ENCODE measurements at regions of chrX and their contacts with region 1.

Region 1: GRCh38 chrX:119698845-119699244 is 5.9 kb upstream of the SEPTIN6 start:
- DNase-seq: peak; percentile 65
- ATAC-seq: peak; percentile 67
- H3K4me3 ChIP-seq: no peak overlapping the region
- H3K27ac ChIP-seq: no peak overlapping the region
- H3K4me1 ChIP-seq: no peaks in the 10 kb centered on the region
- H3K27me3 ChIP-seq: no peaks in the 10 kb centered on the region
- CTCF ChIP-seq: peak; percentile 59

Region 2: GRCh38 chrX:119729408-119730201 is 30.8 kb after region 1 on chrX:
- CTCF ChIA-PET with region 1: interaction called, 3 read pairs
- POLR2A ChIA-PET with region 1: no interaction called
- intact Hi-C with region 1: loop called (anchors 2 kb)
- DNase-seq: peak; percentile 74
- ATAC-seq: peak; percentile 68
- H3K4me3 ChIP-seq: no peak overlapping the region
- H3K27ac ChIP-seq: no peak overlapping the region
- H3K4me1 ChIP-seq: no peaks in the 10 kb centered on the region
- H3K27me3 ChIP-seq: no peaks in the 10 kb centered on the region
- CTCF ChIP-seq: peak; percentile 66

Region 3: GRCh38 chrX:119757979-119758730 is 59.3 kb after region 1 on chrX and contains the start of gene SOWAHD:
- CTCF ChIA-PET with region 1: no interaction called
- POLR2A ChIA-PET with region 1: no interaction called
- intact Hi-C with region 1: loop called (anchors 2 kb)
- DNase-seq: peak; percentile 50
- ATAC-seq: peak; percentile 72
- H3K4me3 ChIP-seq: peak within 1 kb of the TSS; percentile 82
- H3K27ac ChIP-seq: no peak within 1 kb of the TSS
- H3K4me1 ChIP-seq: peaks cover 11% of the 10 kb centered on the region
- H3K27me3 ChIP-seq: no peaks in the 10 kb centered on the region
- CTCF ChIP-seq: no peak
- total RNA-seq, gene SOWAHD: 2.3 and 2.5 TPM in 2 replicates

Region 4: DNA sequence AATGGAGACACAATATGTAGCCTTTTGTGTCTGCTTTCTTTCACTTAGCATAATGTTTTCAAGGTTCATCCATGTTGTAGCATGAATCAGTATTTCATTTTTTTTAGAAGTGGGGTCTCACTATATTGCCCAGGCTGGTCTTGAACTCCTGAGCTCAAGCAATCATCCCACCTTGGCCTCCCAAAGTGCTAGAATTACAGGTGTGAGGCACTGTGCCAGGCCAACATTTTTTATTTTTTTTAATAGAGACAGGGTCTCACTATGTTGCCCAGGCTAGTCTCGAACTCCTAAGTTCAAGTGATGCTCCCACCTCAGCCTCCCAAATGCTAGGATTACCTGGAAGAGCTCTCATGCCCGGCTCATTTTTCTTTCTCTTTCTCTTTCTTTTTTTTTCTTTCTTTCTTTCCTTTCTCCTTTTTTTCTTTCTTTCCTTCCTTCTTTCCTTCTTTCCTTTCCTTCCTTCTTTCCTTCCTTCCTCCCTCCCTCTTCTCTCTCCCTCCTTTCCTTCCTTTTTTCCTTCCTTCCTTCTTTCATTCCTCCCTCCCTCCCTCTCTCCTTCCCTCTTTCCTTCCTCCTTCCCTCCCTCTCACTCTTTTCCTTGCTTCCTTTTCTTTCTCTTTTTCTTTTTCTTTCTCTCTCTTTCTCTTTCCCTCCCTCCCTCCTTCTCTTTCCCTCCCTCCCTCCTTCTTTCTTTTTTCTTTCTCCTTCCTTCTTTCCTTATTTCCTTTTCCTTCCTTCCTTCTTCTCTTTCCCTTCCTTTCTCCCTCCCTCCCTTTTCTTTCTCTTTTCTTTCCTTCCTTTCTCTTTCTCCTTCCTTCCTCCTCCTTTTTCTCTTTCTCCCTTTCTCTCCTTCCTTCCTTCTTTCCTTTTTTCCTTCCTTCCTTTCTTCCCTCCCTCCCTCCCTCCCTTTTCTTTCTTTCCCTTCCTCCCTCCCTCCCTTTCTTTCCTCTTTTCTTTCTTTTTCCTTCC is 102.7 kb after region 1 on chrX:
- CTCF ChIA-PET with region 1: no interaction called
- POLR2A ChIA-PET with region 1: no interaction called
- intact Hi-C with region 1: no loop called
- DNase-seq: no peak
- ATAC-seq: no peak
- H3K4me3 ChIP-seq: no peak overlapping the region
- H3K27ac ChIP-seq: no peak overlapping the region
- H3K4me1 ChIP-seq: no peaks in the 10 kb centered on the region
- H3K27me3 ChIP-seq: no peaks in the 10 kb centered on the region
- CTCF ChIP-seq: no peak